Caco-2 (cell line): ENCODE measurements at regions of chr6 and their contacts with region 1.

Region 1: GRCh38 chr6:107674995-107675738 is 148.9 kb downstream of the SCML4 start:
- DNase-seq: peak; percentile 81 to 87
- H3K4me3 ChIP-seq: no peak overlapping the region
- H3K4me3 Mint-ChIP-seq: peak overlapping the region; percentile 50
- H3K27ac Mint-ChIP-seq: no peak overlapping the region
- H3K4me1 ChIP-seq: no peaks in the 10 kb centered on the region
- H3K4me1 Mint-ChIP-seq: no peaks in the 10 kb centered on the region
- H3K27me3 ChIP-seq: no peaks in the 10 kb centered on the region; the same call in 1 of the 2 replicates
- H3K27me3 Mint-ChIP-seq: peaks cover 3% of the 10 kb centered on the region
- CTCF ChIP-seq: peak; percentile 85 to 86

Region 2: GRCh38 chr6:107704347-107705013 is 29.3 kb after region 1 on chr6:
- CTCF ChIA-PET with region 1: no interaction called
- POLR2A ChIA-PET with region 1: no interaction called
- intact Hi-C with region 1: loop called (anchors 1 kb)
- DNase-seq: peak in 1 of 2 experiments; percentile 52
- H3K4me3 ChIP-seq: no peak overlapping the region
- H3K4me3 Mint-ChIP-seq: no peak overlapping the region
- H3K27ac Mint-ChIP-seq: no peak overlapping the region
- H3K4me1 ChIP-seq: 0 out of 2 replicates have a peak, but pooled peaks cover 3% of the 10 kb centered on the region
- H3K4me1 Mint-ChIP-seq: no peaks in the 10 kb centered on the region
- H3K27me3 ChIP-seq: no peaks in the 10 kb centered on the region
- H3K27me3 Mint-ChIP-seq: peaks cover 3% of the 10 kb centered on the region
- CTCF ChIP-seq: peak; percentile 67 to 77

Region 3: DNA sequence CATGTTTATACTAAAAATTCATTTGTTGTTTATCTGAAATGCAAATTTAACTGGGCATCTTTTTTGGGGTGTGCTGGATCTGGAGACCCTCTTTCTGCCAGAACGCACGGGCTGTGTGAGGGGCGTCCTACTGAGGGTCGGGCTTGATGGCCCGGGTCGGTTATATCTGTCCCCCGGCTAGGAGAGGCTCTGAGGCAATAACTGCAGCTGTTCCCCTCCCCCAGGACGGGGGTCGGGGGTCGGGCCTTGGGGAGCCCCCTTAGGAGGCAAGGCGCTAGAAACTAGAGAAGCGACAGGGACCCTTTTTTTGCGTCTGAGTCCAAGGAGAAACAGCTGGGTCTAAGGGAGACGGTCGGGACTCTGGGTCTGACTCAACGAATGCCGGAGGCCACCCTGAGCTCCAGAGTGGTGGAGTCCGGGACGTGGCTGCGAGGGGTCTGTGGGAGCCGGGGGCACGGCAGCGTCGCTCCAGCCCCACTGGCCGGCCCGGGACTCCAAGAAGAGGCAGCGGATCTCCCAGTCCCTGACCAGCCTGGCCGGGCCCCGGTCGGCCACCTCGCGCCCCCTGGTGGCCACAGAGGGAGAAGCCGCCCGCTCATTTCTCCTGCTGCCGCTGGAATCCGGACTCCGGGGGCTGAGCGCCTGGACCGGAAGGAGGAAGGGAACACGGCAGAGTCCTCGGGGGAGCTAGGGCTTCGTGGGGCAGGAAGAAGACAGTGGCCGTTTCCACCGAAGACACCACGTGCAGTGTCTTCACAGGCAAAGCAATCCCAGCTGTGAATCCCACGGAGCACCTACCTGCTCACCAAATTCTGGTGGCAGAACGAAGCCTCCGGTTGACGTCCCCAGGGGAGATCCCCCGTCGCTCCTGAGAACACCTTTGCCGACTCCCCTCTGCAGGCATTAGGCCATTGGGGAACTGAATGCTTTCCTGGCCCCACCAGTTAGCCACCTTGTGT is 173.0 kb after region 1 on chr6:
- CTCF ChIA-PET with region 1: no interaction called
- POLR2A ChIA-PET with region 1: no interaction called
- intact Hi-C with region 1: loop called (anchors 1 kb)
- DNase-seq: peak; percentile 85 to 94
- H3K4me3 ChIP-seq: peak overlapping the region; percentile 30
- H3K4me3 Mint-ChIP-seq: peak overlapping the region; percentile 76
- H3K27ac Mint-ChIP-seq: peak overlapping the region; percentile 54
- H3K4me1 ChIP-seq: peaks cover 5% of the 10 kb centered on the region; the same call in 1 of the 2 replicates
- H3K4me1 Mint-ChIP-seq: no peaks in the 10 kb centered on the region
- H3K27me3 ChIP-seq: no peaks in the 10 kb centered on the region
- H3K27me3 Mint-ChIP-seq: no peaks in the 10 kb centered on the region
- CTCF ChIP-seq: peak; percentile 88 to 93

Region 4: DNA sequence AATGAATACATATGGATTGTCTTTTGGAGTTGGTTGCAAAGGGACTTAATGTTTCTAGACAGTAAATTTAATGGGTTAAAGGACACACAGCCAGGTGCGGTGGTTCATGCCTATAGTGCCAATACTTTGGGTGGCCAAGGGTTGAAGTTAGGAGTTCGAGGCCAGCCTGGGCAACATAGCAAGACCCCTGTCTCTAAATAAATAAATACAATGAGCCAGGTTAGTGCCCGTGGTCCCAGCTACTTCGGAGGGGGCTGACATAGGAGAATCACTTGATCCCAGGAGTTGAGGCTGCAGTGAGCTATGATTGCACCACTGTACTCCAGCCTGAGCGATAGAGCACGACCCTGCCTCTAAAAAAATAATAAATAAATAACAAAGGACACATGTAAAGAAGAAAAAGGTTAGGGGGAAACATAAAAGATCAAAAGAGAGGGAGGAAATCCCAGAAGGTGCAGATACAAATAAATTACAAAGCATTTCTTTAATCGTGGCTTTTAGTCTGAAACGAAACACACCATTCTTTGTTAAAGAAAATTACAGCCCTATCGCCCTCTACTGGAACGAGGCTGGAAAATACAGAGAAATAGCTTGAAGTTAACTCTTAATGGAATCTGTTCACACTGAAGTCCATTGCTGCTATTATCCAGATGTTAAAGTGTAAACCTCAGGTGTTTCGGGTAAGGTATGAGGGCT is 191.6 kb after region 1 on chr6:
- CTCF ChIA-PET with region 1: interaction called, 4 read pairs
- POLR2A ChIA-PET with region 1: no interaction called
- intact Hi-C with region 1: loop called (anchors 1 kb)
- DNase-seq: peak in 1 of 2 experiments; percentile 30
- H3K4me3 ChIP-seq: no peak overlapping the region
- H3K4me3 Mint-ChIP-seq: no peak overlapping the region
- H3K27ac Mint-ChIP-seq: no peak overlapping the region
- H3K4me1 ChIP-seq: no peaks in the 10 kb centered on the region
- H3K4me1 Mint-ChIP-seq: no peaks in the 10 kb centered on the region
- H3K27me3 ChIP-seq: no peaks in the 10 kb centered on the region
- H3K27me3 Mint-ChIP-seq: no peaks in the 10 kb centered on the region
- CTCF ChIP-seq: peak; percentile 32 to 56